Colonic mucosa (tissue), 4 donors: ENCODE measurements at regions of chr12 and their contacts with region 1.

Region 1: DNA sequence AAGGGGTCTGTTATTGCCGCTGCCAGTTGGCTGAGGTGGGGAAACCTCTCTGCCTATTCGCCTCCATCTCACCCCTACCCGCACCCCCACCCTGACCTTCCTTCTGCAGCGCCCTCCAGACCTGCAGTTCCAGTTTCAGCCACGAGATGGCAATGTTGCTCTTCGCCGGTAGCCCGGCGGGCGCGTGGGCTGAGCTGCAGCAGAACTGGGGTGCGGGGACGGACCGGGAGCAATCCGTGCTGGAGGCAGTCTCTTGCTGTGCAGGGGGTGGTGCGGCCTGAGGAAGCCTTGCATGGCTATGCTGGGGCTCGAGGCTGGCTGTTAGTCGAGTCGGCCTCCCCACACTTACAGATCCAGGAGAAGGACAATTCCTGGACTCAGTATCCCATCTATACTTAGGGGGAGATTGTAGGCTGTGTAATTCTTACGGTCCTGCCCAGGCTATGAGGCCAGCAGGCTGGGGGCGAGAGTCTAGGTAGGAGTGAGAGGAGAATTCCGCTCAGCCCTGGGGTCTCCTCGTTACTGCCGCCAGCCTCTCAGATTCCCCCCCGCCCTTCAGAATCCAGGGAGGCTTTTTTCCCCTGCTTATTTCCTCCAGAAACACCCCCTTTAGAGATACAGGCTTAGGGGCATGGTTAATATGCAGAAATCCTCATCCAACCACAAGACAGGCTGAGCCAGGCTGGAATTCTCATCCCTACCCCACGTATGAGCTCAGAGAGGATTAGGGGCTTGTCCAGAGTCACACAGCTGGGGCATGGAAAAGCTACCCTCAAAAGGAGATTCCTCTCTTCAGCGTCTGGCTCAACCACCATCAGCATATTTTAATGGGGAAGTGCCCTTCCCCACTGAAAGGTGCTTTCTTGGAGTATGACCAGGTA is 118.2 kb downstream of the AACS start:
- DNase-seq: peak; percentile 77
- H3K4me3 ChIP-seq: no peak overlapping the region
- H3K27ac ChIP-seq: no peak overlapping the region
- H3K4me1 ChIP-seq: peaks cover 4% of the 10 kb centered on the region
- H3K27me3 ChIP-seq: peaks cover 40% of the 10 kb centered on the region
- CTCF ChIP-seq: peak; percentile 96

Region 2: DNA sequence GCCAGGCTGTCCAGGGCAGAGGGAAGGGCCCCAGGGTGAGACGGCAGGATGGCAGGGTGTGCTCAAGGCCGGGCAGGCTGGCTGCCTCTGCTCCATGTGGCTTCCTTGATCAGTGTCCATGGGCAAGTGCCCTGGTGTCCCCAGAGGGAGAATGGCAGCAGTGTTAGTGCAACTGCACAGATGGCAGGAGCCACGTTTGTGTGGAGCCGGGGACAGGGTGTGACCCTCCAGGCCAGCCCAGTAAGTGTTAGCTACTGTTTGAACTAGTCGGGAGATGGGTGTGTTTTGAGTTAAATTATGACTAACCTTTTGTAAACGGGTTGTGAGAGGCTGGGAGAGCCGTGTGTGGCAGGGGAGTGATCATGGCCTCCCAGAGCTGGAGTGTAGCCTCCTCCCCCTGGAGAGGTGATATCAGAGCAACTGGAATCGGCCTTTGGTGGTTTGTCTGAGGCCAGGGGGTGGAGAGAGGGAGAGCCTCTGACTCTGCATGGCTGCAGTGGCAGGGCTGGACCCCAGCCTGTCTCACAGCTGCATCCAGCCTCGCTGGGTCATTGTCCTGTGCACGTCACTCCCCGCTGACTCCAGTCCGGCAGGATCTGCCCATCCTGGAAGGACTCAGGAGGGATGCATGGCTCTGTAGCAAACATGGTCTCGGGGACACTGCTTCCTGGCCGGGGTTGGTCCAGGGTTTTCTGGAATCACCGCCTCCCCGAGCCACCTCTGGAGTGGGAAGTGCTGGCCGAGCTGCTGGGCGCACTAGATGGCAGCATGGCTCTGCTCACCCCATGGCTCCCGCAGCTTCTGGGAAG is 90.4 kb before region 1 on chr12:
- intact Hi-C with region 1: loop called (anchors 10 kb)
- DNase-seq: peak; percentile 77
- H3K4me3 ChIP-seq: no peak overlapping the region
- H3K27ac ChIP-seq: peak overlapping the region; percentile 88
- H3K4me1 ChIP-seq: peaks cover 6% of the 10 kb centered on the region
- H3K27me3 ChIP-seq: no peaks in the 10 kb centered on the region
- CTCF ChIP-seq: no peak

Region 3: GRCh38 chr12:125220404-125220803 is 37.0 kb after region 1 on chr12:
- intact Hi-C with region 1: no loop called
- DNase-seq: no peak
- H3K4me3 ChIP-seq: no peak overlapping the region
- H3K27ac ChIP-seq: no peak overlapping the region
- H3K4me1 ChIP-seq: no peaks in the 10 kb centered on the region
- H3K27me3 ChIP-seq: no peaks in the 10 kb centered on the region
- CTCF ChIP-seq: no peak

Region 4: DNA sequence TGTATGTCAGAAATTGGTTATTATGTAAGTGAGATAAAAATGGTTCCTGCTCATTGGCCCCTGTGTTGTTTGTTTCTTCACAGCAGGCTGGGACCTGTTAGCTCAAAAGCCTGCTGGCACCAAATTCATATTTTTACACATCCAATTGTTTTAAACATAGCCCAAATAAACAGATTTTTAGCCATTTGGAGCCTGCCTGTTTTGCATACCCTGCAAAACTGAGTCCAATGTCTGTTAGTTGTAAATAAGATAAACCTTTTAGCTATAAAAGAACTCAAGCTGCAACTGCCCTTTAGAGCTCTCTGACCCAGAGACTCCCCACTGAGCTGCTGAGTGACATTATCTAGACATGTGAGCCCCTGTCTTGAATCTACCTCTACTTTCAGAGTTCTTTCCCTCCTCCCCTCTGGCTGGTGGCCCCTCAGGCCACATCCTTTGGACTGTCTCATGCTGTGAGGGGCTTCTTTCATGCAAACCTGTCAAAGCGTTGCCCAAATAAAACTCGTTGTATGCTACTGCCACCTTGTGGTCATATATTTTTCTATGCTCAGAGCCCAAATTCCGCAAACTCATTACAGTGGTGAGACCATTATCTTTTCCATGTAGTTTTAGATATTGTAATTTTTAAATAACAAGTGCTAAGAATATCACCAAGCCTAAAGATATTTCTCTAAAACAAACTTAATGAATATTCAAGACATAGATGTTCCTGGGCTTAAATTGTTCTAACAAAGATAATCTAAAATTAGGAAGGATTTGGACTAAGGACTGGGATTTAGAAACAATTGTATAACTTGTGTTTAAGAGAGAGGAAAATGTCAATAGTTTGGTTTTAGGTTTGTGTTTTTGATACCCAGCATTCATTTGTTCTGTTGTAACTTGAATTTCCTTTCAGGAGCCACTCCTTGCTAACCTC is 219.7 kb after region 1 on chr12:
- intact Hi-C with region 1: loop called (anchors 5 kb)
- DNase-seq: no peak
- H3K4me3 ChIP-seq: no peak overlapping the region
- H3K27ac ChIP-seq: no peak overlapping the region
- H3K4me1 ChIP-seq: no peaks in the 10 kb centered on the region
- H3K27me3 ChIP-seq: no peaks in the 10 kb centered on the region
- CTCF ChIP-seq: peak; percentile 52

Region 5: GRCh38 chr12:126747530-126748149 is 1564.2 kb after region 1 on chr12:
- intact Hi-C with region 1: loop called (anchors 10 kb)
- DNase-seq: peak; percentile 34
- H3K4me3 ChIP-seq: no peak overlapping the region
- H3K27ac ChIP-seq: no peak overlapping the region
- H3K4me1 ChIP-seq: no peaks in the 10 kb centered on the region
- H3K27me3 ChIP-seq: no peaks in the 10 kb centered on the region
- CTCF ChIP-seq: peak; percentile 89

Region 6: GRCh38 chr12:126883697-126884096 is 1700.3 kb after region 1 on chr12:
- intact Hi-C with region 1: loop called (anchors 10 kb)
- DNase-seq: no peak
- H3K4me3 ChIP-seq: no peak overlapping the region
- H3K27ac ChIP-seq: no peak overlapping the region
- H3K4me1 ChIP-seq: no peaks in the 10 kb centered on the region
- H3K27me3 ChIP-seq: no peaks in the 10 kb centered on the region
- CTCF ChIP-seq: no peak